SK-N-SH (cell line): ENCODE measurements at regions of chrX and their contacts with region 1.

Region 1: GRCh38 chrX:48021026-48021900 is 14.5 kb downstream of the SPACA5 start:
- DNase-seq: peak; percentile 86
- H3K4me3 ChIP-seq: peak overlapping the region; percentile 57 to 74
- H3K27ac ChIP-seq: peak overlapping the region; percentile 77 to 93
- H3K4me1 ChIP-seq: peaks cover 0 to 3% of the 10 kb centered on the region in 2 experiments; a peak in 2 of 4 replicates
- H3K27me3 ChIP-seq: no peaks in the 10 kb centered on the region
- CTCF ChIP-seq: no peak
- EP300 ChIP-seq: peak in 1 of 2 experiments; percentile 48; a peak in 1 of 4 replicates
- RAD21 ChIP-seq: no peak; the same call in 1 of the 2 replicates

Region 2: DNA sequence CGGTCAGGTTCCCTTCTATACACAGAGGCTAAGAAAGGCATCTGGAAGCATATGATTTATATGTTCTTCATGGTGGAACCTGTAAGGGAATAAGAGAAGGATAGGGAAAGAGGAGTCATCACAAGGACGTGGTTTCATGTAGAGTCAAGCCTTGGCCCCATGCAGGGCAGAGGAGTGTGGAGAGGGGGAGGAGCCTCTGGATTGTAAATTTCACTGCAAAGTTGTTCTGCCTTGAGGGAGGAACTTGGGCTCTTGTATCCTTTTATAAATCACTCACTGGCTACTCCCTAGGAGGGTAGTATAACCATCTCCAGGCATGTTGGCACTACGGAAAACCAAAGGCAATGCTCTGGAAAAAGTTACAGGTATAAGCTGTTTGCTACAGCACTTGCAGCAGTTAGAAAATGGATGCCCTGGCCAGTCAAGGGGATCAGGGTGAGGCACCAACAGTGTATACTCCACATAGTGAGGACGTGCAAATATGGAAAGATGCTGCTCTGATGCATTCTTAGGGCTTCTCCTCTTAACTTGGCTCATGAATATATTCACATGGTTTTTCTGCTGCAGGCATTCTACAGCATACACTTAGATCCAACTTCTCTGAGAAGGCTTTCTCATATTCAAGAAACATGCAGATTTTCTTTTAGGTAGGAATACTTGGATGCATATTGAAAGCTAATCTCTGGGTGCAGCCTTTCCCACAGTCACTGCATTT is 244.8 kb before region 1 on chrX:
- CTCF ChIA-PET with region 1: no interaction called
- POLR2A ChIA-PET with region 1: no interaction called
- DNase-seq: no peak
- H3K4me3 ChIP-seq: no peak overlapping the region
- H3K27ac ChIP-seq: no peak overlapping the region
- H3K4me1 ChIP-seq: no peaks in the 10 kb centered on the region
- H3K27me3 ChIP-seq: no peaks in the 10 kb centered on the region; the same call in 1 of the 2 replicates
- CTCF ChIP-seq: no peak
- EP300 ChIP-seq: no peak
- RAD21 ChIP-seq: no peak

Region 3: DNA sequence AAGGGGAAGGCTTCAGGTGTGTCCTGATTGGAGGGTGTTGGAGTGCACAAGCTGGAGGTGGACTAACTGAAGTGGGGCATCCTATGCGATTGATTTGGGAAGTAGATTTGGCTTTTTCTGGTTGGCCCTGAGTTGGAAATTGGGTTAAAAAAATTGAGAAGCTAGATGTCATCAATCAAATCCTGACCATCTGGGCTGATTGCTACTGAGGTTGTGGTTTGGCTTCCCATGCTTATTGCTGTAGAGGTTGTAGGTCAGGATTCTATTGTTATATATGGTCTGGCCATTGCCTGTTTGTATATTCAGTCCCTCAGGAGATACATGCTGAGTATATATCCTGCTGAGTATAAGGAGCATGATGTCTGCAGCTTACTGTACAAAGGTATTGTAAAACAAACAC is 192.3 kb before region 1 on chrX:
- CTCF ChIA-PET with region 1: interaction called, 18 read pairs
- POLR2A ChIA-PET with region 1: no interaction called
- DNase-seq: no peak
- H3K4me3 ChIP-seq: no peak overlapping the region
- H3K27ac ChIP-seq: no peak overlapping the region
- H3K4me1 ChIP-seq: no peaks in the 10 kb centered on the region; a peak in 1 of 4 replicates
- H3K27me3 ChIP-seq: no peaks in the 10 kb centered on the region
- CTCF ChIP-seq: no peak
- EP300 ChIP-seq: no peak
- RAD21 ChIP-seq: no peak

Region 4: GRCh38 chrX:47836164-47837072 is 184.8 kb before region 1 on chrX and contains the start of gene ZNF81:
- CTCF ChIA-PET with region 1: interaction called, 11 read pairs
- POLR2A ChIA-PET with region 1: no interaction called
- DNase-seq: peak; percentile 86
- H3K4me3 ChIP-seq: peak within 1 kb of the TSS; percentile 75 to 90
- H3K27ac ChIP-seq: peak within 1 kb of the TSS; percentile 60 to 85; a peak in 3 of 4 replicates
- H3K4me1 ChIP-seq: peaks cover 0 to 9% of the 10 kb centered on the region in 2 experiments; a peak in 3 of 4 replicates
- H3K27me3 ChIP-seq: no peaks in the 10 kb centered on the region
- CTCF ChIP-seq: 0 out of 2 replicates have a peak, but pooled peaks have one; percentile 7
- EP300 ChIP-seq: no peak
- RAD21 ChIP-seq: no peak
- polyA plus RNA-seq, gene ZNF81: 3.5 and 6.0 TPM in 2 replicates

Region 5: GRCh38 chrX:47854474-47854873 is 166.8 kb before region 1 on chrX:
- CTCF ChIA-PET with region 1: interaction called, 28 read pairs
- POLR2A ChIA-PET with region 1: no interaction called
- DNase-seq: peak; percentile 14
- H3K4me3 ChIP-seq: no peak overlapping the region
- H3K27ac ChIP-seq: no peak overlapping the region
- H3K4me1 ChIP-seq: no peaks in the 10 kb centered on the region
- H3K27me3 ChIP-seq: no peaks in the 10 kb centered on the region
- CTCF ChIP-seq: peak; percentile 52
- EP300 ChIP-seq: no peak
- RAD21 ChIP-seq: peak; percentile 68

Region 6: GRCh38 chrX:48035891-48036290 is 14.6 kb after region 1 on chrX:
- CTCF ChIA-PET with region 1: interaction called, 16 read pairs
- POLR2A ChIA-PET with region 1: no interaction called
- DNase-seq: no peak
- H3K4me3 ChIP-seq: no peak overlapping the region
- H3K27ac ChIP-seq: no peak overlapping the region
- H3K4me1 ChIP-seq: no peaks in the 10 kb centered on the region
- H3K27me3 ChIP-seq: peaks cover 4% of the 10 kb centered on the region; the same call in 1 of the 2 replicates
- CTCF ChIP-seq: no peak
- EP300 ChIP-seq: no peak
- RAD21 ChIP-seq: no peak